PC-9 (cell line): ENCODE measurements at regions of chr2 and their contacts with region 1.

Region 1: GRCh38 chr2:32991091-32991845 is 44.5 kb downstream of the LTBP1 start:
- DNase-seq: no peak
- H3K4me3 ChIP-seq: no peak overlapping the region
- H3K27ac ChIP-seq: no peak overlapping the region
- H3K4me1 ChIP-seq: no peaks in the 10 kb centered on the region
- H3K27me3 ChIP-seq: no peaks in the 10 kb centered on the region
- CTCF ChIP-seq: no peak

Region 2: GRCh38 chr2:32965523-32966171 is 25.6 kb before region 1 on chr2:
- CTCF ChIA-PET with region 1: no interaction called
- POLR2A ChIA-PET with region 1: interaction called, 14 read pairs
- intact Hi-C with region 1: no loop called
- DNase-seq: peak in 1 of 2 experiments; percentile 33
- H3K4me3 ChIP-seq: no peak overlapping the region
- H3K27ac ChIP-seq: no peak overlapping the region
- H3K4me1 ChIP-seq: no peaks in the 10 kb centered on the region
- H3K27me3 ChIP-seq: no peaks in the 10 kb centered on the region
- CTCF ChIP-seq: no peak